HEK293 (cell line): ENCODE measurements at regions of chr6 and their contacts with region 1.

Region 1: DNA sequence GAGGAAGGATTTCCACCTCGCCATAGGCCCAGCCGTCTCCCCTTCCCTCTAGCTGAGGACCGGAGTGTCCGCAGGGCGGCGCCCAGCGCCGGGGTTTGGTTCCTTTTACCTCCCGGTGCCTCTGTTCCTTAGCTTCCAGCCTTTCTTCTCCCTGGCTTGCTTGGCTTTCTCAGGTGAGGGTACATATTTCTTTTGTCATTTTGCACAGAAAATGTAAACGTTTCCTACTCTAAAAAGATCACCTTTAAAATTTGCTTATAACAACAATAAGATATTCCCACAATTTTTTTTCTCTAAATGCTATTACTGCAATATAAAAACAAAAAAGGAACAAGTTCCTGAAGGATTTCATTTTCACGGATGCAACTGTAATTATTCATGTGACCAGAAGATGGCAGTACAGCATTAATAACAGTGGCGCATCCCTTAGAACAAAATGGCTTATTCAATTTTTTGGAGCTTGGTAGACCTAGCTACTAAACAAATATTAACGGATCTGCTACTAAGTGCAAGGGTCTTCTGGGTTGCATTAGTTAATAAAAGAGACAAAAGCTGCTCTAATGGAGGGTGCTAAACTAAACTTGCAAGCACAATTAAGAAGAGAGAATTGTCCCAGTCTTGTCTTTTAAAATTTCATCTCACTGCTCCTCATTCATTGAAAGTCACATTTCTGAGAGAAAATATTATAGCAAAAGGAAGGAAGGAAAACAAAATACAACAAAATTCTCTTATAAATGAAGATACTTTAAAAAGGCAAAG is 172.9 kb downstream of the ADGRG6 start:
- H3K4me3 ChIP-seq: no peak overlapping the region
- H3K27ac ChIP-seq: no peak overlapping the region
- H3K4me1 ChIP-seq: no peaks in the 10 kb centered on the region
- CTCF ChIP-seq: peak; percentile 60; the same call in 1 of the 2 replicates

Region 2: GRCh38 chr6:142146828-142147662 is 327.7 kb before region 1 on chr6 and contains the starts of genes NMBR and VTA1:
- CTCF ChIA-PET with region 1: interaction called, 14 read pairs
- POLR2A ChIA-PET with region 1: no interaction called
- H3K4me3 ChIP-seq: peak within 1 kb of the TSS; percentile 82
- H3K27ac ChIP-seq: no peak within 1 kb of the TSS; the same call in 1 of the 2 replicates
- H3K4me1 ChIP-seq: 0 out of 2 replicates have a peak, but pooled peaks cover 3% of the 10 kb centered on the region
- CTCF ChIP-seq: peak; percentile 97

Region 3: DNA sequence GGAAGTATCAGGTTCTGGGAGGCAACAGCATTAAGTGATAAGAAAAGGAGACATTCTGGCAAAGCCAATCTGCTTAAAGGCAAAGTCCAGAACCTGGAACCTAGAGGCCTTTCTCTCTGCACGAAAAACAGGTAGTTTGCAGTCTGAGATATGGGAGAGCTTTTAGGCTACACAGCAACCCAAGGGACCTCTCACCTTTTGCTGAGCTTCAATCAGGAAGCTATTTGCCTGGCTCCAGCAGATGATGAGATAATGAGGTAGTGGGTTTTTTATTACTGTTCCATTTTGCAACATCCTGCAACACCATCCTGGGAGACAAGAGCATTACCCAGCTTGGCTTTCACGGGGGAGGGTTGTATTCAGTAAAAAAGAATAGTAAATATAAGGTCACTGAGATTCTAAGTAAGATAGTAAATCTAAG is 29.8 kb before region 1 on chr6:
- CTCF ChIA-PET with region 1: interaction called, 11 read pairs
- POLR2A ChIA-PET with region 1: no interaction called
- H3K4me3 ChIP-seq: no peak overlapping the region
- H3K27ac ChIP-seq: no peak overlapping the region
- H3K4me1 ChIP-seq: 0 out of 2 replicates have a peak, but pooled peaks cover 3% of the 10 kb centered on the region
- CTCF ChIP-seq: no peak

Region 4: GRCh38 chr6:142500250-142500786 is 25.6 kb after region 1 on chr6:
- CTCF ChIA-PET with region 1: interaction called, 12 read pairs
- POLR2A ChIA-PET with region 1: no interaction called
- H3K4me3 ChIP-seq: no peak overlapping the region
- H3K27ac ChIP-seq: no peak overlapping the region
- H3K4me1 ChIP-seq: no peaks in the 10 kb centered on the region
- CTCF ChIP-seq: no peak

Region 5: DNA sequence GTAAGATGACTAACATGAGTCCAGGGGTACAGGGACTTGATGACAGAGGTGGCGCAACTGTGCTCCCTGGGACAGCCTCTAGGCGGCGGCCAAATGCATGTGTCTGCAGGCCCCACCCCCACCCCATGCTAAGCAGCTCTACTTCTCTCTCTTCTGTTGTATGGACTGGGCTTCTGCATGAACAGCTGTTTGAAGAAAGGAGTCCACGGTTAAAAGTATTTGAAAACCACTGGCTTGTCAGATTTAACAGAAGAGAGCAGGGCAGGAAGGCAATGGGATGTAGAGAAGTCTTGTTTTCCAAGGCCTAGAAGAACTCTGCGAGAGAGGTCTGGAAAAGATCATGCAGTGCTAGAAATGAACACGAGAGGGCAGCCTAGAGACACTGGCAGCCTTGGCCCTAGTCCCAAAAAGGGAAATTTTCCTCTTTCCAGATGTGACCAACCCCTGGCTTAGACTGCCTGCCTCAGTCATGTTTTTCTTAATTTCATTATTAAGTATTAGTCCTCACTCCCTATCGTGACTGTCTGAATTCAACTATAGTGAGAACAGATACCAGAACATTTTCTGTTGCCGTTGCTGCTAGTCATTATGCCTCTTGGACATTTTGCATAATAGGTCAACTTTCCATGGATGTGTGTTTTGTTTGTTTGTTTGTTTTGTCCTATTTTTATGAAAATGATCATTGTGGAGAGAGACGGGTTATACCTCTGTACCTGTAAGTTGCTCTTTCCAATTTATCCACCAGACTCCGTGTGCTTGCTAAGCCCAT is 92.1 kb after region 1 on chr6:
- CTCF ChIA-PET with region 1: interaction called, 23 read pairs
- POLR2A ChIA-PET with region 1: no interaction called
- H3K4me3 ChIP-seq: no peak overlapping the region
- H3K27ac ChIP-seq: no peak overlapping the region
- H3K4me1 ChIP-seq: no peaks in the 10 kb centered on the region
- CTCF ChIP-seq: peak; percentile 70

Region 6: DNA sequence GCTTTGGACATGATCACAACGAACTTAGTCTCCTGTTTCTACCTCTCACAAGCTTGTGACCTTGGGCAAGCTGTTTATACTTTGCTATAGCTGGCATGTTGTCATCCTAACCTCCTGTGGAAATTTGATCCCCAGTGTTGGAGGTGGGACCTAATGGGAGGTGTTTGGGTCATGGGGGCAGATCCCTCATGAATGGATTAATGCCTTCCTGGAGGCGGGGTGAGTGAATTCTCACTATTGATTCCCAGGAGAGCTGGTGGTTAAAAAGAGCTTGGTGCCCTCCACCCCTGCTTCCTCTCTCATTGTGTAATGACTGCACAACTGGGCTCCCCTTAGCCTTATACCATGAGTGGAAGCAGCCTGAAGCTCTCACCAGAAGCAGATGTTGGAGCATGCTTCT is 241.4 kb after region 1 on chr6:
- CTCF ChIA-PET with region 1: no interaction called
- POLR2A ChIA-PET with region 1: no interaction called
- H3K4me3 ChIP-seq: no peak overlapping the region
- H3K27ac ChIP-seq: no peak overlapping the region
- H3K4me1 ChIP-seq: peaks cover 6% of the 10 kb centered on the region; the same call in 1 of the 2 replicates
- CTCF ChIP-seq: no peak

Region 7: DNA sequence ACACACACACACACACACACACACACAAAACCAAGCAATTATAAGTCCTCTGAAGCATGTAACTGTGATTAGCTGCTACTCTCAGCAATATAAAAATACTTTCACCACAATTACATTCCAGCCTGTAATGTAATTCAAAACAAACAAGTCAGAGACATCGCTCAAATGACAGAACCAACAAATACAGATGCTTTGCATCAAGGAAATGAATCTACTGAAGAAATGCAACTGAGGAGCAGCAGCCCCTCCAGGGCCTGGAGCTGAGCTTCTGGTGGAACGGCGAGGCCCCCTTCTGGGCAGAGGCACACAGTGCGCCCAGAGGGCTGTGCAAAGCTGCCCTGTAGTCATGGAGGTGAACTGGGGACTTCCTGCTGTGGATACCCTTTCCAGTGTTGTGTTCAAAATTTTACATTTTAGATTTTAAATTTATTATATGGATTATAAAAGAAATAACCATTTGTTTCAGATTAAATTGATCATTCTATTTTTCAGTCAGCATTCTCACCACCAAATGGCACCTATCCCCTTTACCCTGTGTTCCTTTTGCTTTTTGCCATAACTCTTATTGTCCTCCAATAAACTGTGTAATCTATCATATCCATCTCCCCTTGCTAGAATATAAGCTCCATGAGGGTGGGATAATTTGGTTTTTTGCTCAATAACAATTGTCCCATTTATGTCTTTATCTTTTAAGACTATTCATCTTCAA is 952.6 kb after region 1 on chr6:
- CTCF ChIA-PET with region 1: interaction called, 28 read pairs
- POLR2A ChIA-PET with region 1: no interaction called
- H3K4me3 ChIP-seq: no peak overlapping the region
- H3K27ac ChIP-seq: no peak overlapping the region
- H3K4me1 ChIP-seq: no peaks in the 10 kb centered on the region
- CTCF ChIP-seq: peak; percentile 80